ENCODE measurements at regions of chr22 and their contacts with region 1.

Region 1: GRCh38 chr22:41285820-41286638 is at the start of gene RANGAP1:
- DNase-seq: peak; percentile 99
- ATAC-seq: peak; percentile 96
- H3K4me3 ChIP-seq: peak within 1 kb of the TSS; percentile 80 to 98 (median 88)
- H3K4me3 Mint-ChIP-seq: peak within 1 kb of the TSS; percentile 100
- H3K27ac ChIP-seq: peak within 1 kb of the TSS; percentile 94 to 95
- H3K27ac Mint-ChIP-seq: peak within 1 kb of the TSS; percentile 99
- H3K4me1 ChIP-seq: peaks cover 12 to 16% of the 10 kb centered on the region in 2 donors
- H3K4me1 Mint-ChIP-seq: peaks cover 26% of the 10 kb centered on the region
- H3K27me3 ChIP-seq: no peaks in the 10 kb centered on the region
- H3K27me3 Mint-ChIP-seq: no peaks in the 10 kb centered on the region
- CTCF ChIP-seq: no peak
- total RNA-seq, gene RANGAP1: 48.4 and 48.8 TPM in 2 replicates

Region 2: DNA sequence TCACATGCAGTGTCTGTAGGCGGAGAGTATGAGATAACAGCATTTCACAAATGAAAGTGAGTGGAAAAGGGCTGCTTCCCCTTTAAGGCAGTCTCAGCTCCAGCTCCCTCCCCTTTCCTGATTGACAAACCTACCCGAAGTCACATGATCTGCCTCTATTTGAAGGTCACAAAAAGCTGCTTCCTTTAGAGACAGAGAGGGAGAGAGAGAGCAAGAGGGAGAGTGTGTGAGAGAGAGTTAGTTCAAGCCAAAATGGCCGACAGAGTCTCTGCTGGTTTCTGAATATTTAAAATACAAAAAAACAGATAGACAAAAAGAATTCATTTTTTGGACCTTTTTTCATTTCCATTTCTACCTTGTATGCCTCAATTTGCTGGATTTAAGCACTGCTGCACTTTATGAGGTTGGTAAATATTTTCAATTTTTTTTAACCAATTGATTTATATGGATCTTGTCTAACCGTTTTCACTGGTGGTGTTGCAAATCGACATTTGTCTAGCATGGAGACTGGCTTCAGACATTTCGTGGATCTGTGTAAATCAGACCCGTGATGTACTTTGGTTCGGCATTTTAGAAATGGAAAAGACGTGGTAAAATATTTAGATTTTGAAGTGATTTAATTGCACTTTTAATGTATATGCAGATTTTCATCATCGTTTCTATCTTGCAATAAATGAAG is 1108.2 kb before region 1 on chr22 and contains the start of gene TNRC6B:
- CTCF ChIA-PET with region 1: no interaction called
- POLR2A ChIA-PET with region 1: no interaction called
- intact Hi-C with region 1: loop called (anchors 5 kb)
- DNase-seq: peak; percentile 93
- ATAC-seq: peak; percentile 90
- H3K4me3 ChIP-seq: peak within 1 kb of the TSS; percentile 56 to 100 (median 72)
- H3K4me3 Mint-ChIP-seq: peak within 1 kb of the TSS; percentile 84
- H3K27ac ChIP-seq: peak within 1 kb of the TSS; percentile 65 to 79
- H3K27ac Mint-ChIP-seq: peak within 1 kb of the TSS; percentile 84
- H3K4me1 ChIP-seq: peaks cover 41 to 42% of the 10 kb centered on the region in 2 donors
- H3K4me1 Mint-ChIP-seq: peaks cover 61% of the 10 kb centered on the region
- H3K27me3 ChIP-seq: no peaks in the 10 kb centered on the region
- H3K27me3 Mint-ChIP-seq: no peaks in the 10 kb centered on the region
- CTCF ChIP-seq: no peak
- total RNA-seq, gene TNRC6B: 210 and 248 TPM in 2 replicates

Region 3: GRCh38 chr22:40950962-40951794 is 334.9 kb before region 1 on chr22 and contains the start of gene RBX1:
- CTCF ChIA-PET with region 1: no interaction called
- POLR2A ChIA-PET with region 1: interaction called, 5 read pairs
- intact Hi-C with region 1: loop called (anchors 1 kb)
- DNase-seq: peak; percentile 100
- ATAC-seq: peak; percentile 82
- H3K4me3 ChIP-seq: peak within 1 kb of the TSS; percentile 88 to 95 (median 92)
- H3K4me3 Mint-ChIP-seq: peak within 1 kb of the TSS; percentile 100
- H3K27ac ChIP-seq: peak within 1 kb of the TSS; percentile 99 to 100
- H3K27ac Mint-ChIP-seq: peak within 1 kb of the TSS; percentile 100
- H3K4me1 ChIP-seq: peaks cover 18 to 21% of the 10 kb centered on the region in 2 donors
- H3K4me1 Mint-ChIP-seq: peaks cover 27% of the 10 kb centered on the region
- H3K27me3 ChIP-seq: no peaks in the 10 kb centered on the region
- H3K27me3 Mint-ChIP-seq: no peaks in the 10 kb centered on the region
- CTCF ChIP-seq: no peak
- total RNA-seq, gene RBX1: 49.8 and 50.7 TPM in 2 replicates

Region 4: GRCh38 chr22:41197038-41197972 is 88.7 kb before region 1 on chr22:
- CTCF ChIA-PET with region 1: no interaction called
- POLR2A ChIA-PET with region 1: no interaction called
- intact Hi-C with region 1: loop called (anchors 1 kb)
- DNase-seq: peak; percentile 88
- ATAC-seq: peak; percentile 92
- H3K4me3 ChIP-seq: peak overlapping the region; percentile 73 to 85 (median 76)
- H3K4me3 Mint-ChIP-seq: peak overlapping the region; percentile 89
- H3K27ac ChIP-seq: no peak overlapping the region
- H3K27ac Mint-ChIP-seq: peak overlapping the region; percentile 2
- H3K4me1 ChIP-seq: peaks cover 7 to 17% of the 10 kb centered on the region in 2 donors
- H3K4me1 Mint-ChIP-seq: peaks cover 18% of the 10 kb centered on the region
- H3K27me3 ChIP-seq: peaks cover 0 to 7% (median 3%) of the 10 kb centered on the region in 4 experiments
- H3K27me3 Mint-ChIP-seq: peaks cover 3% of the 10 kb centered on the region
- CTCF ChIP-seq: peak; percentile 5

Region 5: GRCh38 chr22:41301105-41302020 is 15.3 kb after region 1 on chr22 and contains the start of gene ZC3H7B:
- CTCF ChIA-PET with region 1: interaction called, 11 read pairs
- POLR2A ChIA-PET with region 1: interaction called, 22 read pairs
- intact Hi-C with region 1: loop called (anchors 1 kb)
- DNase-seq: peak; percentile 94
- ATAC-seq: peak; percentile 92
- H3K4me3 ChIP-seq: peak within 1 kb of the TSS; percentile 59 to 95 (median 86)
- H3K4me3 Mint-ChIP-seq: peak within 1 kb of the TSS; percentile 86
- H3K27ac ChIP-seq: peak within 1 kb of the TSS; percentile 73 to 84
- H3K27ac Mint-ChIP-seq: peak within 1 kb of the TSS; percentile 75
- H3K4me1 ChIP-seq: peaks cover 13 to 17% of the 10 kb centered on the region in 2 donors
- H3K4me1 Mint-ChIP-seq: peaks cover 28% of the 10 kb centered on the region
- H3K27me3 ChIP-seq: no peaks in the 10 kb centered on the region
- H3K27me3 Mint-ChIP-seq: no peaks in the 10 kb centered on the region
- CTCF ChIP-seq: peak; percentile 51
- total RNA-seq, gene ZC3H7B: 41.9 and 42.2 TPM in 2 replicates

Region 6: GRCh38 chr22:41468381-41469217 is 182.6 kb after region 1 on chr22 and contains the starts of genes ACO2 and PHF5A:
- CTCF ChIA-PET with region 1: no interaction called
- POLR2A ChIA-PET with region 1: interaction called, 3 read pairs
- intact Hi-C with region 1: loop called (anchors 1 kb)
- DNase-seq: peak; percentile 99
- ATAC-seq: peak; percentile 91
- H3K4me3 ChIP-seq: peak within 1 kb of the TSS; percentile 71 to 98 (median 86)
- H3K4me3 Mint-ChIP-seq: peak within 1 kb of the TSS; percentile 89
- H3K27ac ChIP-seq: peak within 1 kb of the TSS; percentile 99
- H3K27ac Mint-ChIP-seq: peak within 1 kb of the TSS; percentile 98
- H3K4me1 ChIP-seq: peaks cover 20 to 31% of the 10 kb centered on the region in 2 donors
- H3K4me1 Mint-ChIP-seq: peaks cover 59% of the 10 kb centered on the region
- H3K27me3 ChIP-seq: no peaks in the 10 kb centered on the region
- H3K27me3 Mint-ChIP-seq: no peaks in the 10 kb centered on the region
- CTCF ChIP-seq: no peak
- total RNA-seq, gene ACO2: 91.7 and 104 TPM in 2 replicates
- total RNA-seq, gene PHF5A: 31.6 and 34.5 TPM in 2 replicates

Measured in B cell (primary cell).